ENCODE measurements at regions of chr19 and their contacts with region 1.

Region 1: DNA sequence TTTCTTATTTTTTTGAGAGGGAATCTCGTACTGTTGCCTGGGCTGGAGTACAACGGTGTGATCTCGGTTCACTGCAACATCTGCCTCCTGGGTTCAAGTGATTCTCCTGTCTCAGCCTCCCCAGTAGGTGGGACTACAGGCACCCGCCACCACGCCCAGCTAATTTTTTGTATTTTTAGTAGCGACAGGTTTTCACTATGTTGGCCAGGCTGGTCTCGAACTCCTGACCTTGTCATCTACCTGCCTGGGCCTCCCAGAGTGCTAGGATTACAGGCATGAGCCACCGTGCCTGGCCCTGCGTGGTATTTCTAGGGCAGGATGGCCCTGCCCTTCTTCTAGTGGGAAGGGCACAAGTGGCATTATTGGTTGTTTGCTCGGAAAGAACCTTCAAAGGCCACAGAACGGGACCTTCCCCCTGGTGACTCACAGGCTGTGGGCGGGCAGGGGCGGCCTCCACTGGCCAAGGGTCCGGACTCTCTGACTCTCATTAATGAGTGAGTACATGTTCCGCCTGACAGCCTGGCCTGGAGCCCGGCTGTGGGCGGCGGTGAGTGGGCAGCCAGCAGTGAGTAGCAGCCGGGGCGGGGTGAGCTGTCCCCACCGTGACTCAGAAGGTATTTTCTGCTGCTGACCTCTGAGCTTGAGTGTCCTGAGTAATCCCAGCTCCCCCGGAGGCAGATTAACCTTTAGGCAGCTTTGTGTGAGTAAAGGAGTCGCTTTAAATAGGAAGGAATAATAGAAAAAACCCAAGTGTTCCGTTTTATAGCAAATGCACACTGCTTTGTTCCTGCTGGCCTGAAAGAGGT is 5.1 kb downstream of the DOT1L start:
- DNase-seq: peak; percentile 95 to 99 (median 96)
- ATAC-seq: peak; percentile 89 to 95 (median 94)
- H3K4me3 ChIP-seq: peak overlapping the region in 8 of 12 donors; percentile 1 to 48 (median 30)
- H3K27ac ChIP-seq: peak overlapping the region; percentile 72 to 98 (median 94)
- H3K4me1 ChIP-seq: peaks cover 33 to 91% (median 76%) of the 10 kb centered on the region in 12 donors
- H3K27me3 ChIP-seq: no peaks in the 10 kb centered on the region
- CTCF ChIP-seq: peak in 4 of 12 donors; percentile 1 to 27 (median 16)
- POLR2A ChIP-seq: peak in 1 of 2 donors; percentile 52

Region 2: DNA sequence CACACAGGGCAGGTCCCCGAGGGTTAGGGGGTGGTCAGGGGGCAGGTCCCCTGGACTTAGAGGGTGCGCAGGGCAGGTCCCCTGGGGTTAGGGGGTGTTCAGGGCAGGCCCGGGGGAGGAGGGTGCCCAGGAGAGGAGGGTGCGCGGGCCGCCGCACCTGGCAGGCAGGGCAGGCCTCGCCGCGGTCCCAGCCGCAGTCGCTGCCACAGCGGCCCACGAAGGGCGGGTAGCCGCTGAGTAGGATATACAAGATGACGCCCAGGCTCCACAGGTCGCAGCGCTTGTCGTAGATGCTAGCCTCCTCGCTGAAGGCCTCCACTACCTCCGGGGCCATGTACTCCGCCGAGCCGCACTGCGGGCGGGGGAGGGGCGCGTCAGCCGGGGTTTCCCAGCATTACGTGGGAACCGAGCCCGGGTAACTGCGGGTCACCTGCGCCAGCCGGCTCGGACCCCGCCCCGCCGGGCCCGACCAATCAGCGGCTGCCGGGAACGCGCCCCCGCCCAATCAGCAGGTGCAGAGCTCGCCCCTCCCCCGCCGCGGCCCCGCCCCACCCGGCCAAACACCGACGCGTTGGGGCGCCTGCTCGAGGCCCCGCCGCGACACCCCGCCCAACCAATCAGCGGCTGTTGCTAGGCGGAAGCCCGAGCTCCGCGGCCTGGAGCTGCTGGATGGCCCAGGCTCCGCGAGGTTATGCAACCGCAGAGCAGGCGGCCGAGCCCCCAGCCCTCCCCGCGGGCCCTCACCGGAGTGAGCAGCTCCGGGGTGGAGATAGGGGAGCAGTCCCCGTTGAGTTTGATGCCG is 126.9 kb before region 1 on chr19:
- intact Hi-C with region 1: no loop called
- DNase-seq: peak; percentile 97 to 99 (median 98)
- ATAC-seq: peak; percentile 71 to 91 (median 88)
- H3K4me3 ChIP-seq: peak overlapping the region in 10 of 12 donors; percentile 30 to 56 (median 38)
- H3K27ac ChIP-seq: peak overlapping the region; percentile 71 to 99 (median 91)
- H3K4me1 ChIP-seq: peaks cover 18 to 81% (median 66%) of the 10 kb centered on the region in 12 donors
- H3K27me3 ChIP-seq: no peaks in the 10 kb centered on the region
- CTCF ChIP-seq: no peak
- POLR2A ChIP-seq: peak in 1 of 2 donors; percentile 23

Region 3: DNA sequence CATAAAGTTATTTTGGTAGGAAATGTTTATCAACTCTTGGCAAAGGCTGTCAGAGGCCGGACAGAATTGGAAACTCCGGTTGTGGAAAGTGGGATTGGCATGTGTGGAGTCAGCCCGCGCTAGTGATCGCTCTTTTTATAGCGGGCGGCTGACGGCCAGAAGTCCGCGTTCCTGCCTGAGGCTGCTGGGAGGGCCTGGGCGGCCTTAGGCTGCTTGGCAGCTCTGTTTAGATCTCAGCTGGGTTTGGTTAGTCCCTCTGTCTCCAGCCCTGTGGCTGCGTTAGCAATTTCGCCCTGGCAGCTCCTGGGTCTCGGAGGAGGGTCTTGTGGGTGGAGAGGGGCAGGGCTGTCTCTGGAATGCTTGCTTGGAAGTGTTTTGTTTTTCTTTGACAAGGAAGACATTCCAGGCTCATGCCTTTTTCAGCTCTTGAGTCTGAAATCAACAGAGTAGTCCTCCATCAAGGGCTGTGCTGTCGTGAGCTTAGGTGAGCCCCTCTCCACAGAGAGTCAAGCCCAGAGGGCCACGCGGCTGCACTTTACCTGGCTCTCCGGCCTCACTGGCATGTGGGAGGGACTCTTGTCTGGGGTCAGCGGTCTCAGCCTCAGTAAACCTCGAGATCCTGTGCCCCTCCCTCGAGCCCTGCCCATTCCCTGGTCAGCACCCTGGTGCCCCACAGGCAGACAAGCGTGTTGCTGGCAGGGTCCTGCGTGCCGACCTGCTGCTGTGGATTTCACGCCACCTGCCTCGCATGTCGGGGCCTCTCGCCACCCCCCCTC is 17.4 kb after region 1 on chr19:
- intact Hi-C with region 1: loop called in 1 of 10 experiments (anchors 2 kb)
- DNase-seq: peak; percentile 87 to 93 (median 88)
- ATAC-seq: peak; percentile 93 to 96 (median 94)
- H3K4me3 ChIP-seq: peak overlapping the region in 7 of 12 donors; percentile 1 to 26 (median 20)
- H3K27ac ChIP-seq: peak overlapping the region; percentile 16 to 89 (median 82)
- H3K4me1 ChIP-seq: peaks cover 5 to 73% (median 44%) of the 10 kb centered on the region in 12 donors
- H3K27me3 ChIP-seq: no peaks in the 10 kb centered on the region
- CTCF ChIP-seq: no peak
- POLR2A ChIP-seq: no peak

Region 4: DNA sequence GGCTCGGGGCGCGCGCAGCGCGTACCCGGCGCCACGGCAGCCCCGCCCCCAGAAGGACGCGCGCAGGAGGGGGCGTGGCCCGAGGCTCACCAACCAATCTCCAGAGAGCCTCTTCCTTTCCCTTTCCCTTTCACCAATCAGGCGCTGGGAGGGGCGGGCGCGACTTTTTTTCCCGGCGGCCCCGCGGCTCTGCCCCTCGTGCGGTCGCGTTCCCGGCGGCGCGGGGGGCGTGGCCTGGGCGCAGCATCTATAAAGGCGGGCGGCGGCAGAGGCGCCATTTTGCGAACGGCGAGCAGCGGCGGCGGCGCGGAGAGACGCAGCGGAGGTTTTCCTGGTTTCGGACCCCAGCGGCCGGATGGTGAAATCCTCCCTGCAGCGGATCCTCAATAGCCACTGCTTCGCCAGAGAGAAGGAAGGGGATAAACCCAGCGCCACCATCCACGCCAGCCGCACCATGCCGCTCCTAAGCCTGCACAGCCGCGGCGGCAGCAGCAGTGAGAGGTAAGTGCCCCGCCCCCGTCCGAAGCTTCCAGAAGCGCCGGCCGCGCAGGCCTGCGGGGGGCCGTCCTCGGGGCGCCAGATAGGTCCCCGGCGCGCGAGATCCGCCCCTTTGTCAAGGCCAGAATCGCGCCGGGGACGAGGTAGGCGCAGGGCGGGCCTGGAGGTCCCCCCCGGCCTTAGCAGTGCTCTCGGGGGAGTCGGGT is 100.6 kb after region 1 on chr19:
- intact Hi-C with region 1: loop called in 3 of 10 experiments (anchors 5 to 10 kb)
- DNase-seq: peak; percentile 98 to 100 (median 99)
- ATAC-seq: peak; percentile 89 to 92 (median 91)
- H3K4me3 ChIP-seq: peak overlapping the region; percentile 87 to 100 (median 98)
- H3K27ac ChIP-seq: peak overlapping the region; percentile 91 to 100 (median 99)
- H3K4me1 ChIP-seq: peaks cover 9 to 73% (median 42%) of the 10 kb centered on the region in 12 donors
- H3K27me3 ChIP-seq: no peaks in the 10 kb centered on the region
- CTCF ChIP-seq: no peak
- POLR2A ChIP-seq: peak; percentile 100